Naive thymus-derived CD4-positive, alpha-beta T cell (primary cell): ENCODE measurements at regions of chr2 and their contacts with region 1.

Region 1: DNA sequence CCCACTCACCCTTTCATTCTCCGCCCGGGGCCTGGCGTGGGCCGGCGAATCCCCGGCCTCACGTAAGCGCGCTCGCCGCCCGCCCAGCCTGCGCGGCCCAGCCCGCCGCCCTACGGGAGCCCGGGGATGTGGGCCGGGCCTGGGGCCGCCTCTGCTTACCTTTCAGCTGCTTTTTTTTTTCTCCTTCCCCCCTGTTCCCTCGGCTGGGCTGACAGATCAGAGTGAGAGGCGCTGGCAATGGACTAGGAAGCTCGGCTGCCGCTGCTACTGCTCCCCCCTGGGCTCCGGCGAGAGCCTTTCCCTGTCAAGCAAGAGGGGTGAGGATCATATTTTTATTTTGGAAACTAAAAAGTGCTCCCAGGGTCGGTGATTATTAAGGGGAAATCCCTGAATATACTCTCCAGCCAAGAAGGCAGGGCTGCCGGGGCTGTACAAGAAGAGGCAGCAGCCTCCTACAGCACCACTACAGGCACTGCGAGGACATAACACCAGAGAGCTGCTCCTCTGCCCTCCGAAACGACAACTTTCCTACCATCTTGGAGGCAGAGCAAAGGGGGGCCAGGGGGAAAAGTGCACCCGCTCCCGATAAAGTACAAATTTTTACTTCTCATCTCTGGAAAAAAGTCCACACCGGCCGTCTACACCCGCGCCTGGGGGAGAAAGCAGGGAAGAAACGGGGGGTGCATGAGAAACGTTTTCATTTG is at the start of gene INO80D:
- DNase-seq: peak; percentile 71 to 92 (median 90)
- ATAC-seq: peak; percentile 95
- H3K4me3 ChIP-seq: peak within 1 kb of the TSS; percentile 97
- H3K4me3 Mint-ChIP-seq: peak within 1 kb of the TSS; percentile 96 to 99 (median 98)
- H3K27ac ChIP-seq: peak within 1 kb of the TSS; percentile 97
- H3K27ac Mint-ChIP-seq: peak within 1 kb of the TSS; percentile 98 to 100 (median 100)
- H3K4me1 ChIP-seq: peaks cover 0 to 9% of the 10 kb centered on the region in 2 donors
- H3K4me1 Mint-ChIP-seq: peaks cover 25 to 61% (median 47%) of the 10 kb centered on the region in 7 donors
- H3K27me3 ChIP-seq: no peaks in the 10 kb centered on the region
- H3K27me3 Mint-ChIP-seq: no peaks in the 10 kb centered on the region
- total RNA-seq, gene INO80D: 30.7 to 50.9 (median 43.4) TPM

Region 2: DNA sequence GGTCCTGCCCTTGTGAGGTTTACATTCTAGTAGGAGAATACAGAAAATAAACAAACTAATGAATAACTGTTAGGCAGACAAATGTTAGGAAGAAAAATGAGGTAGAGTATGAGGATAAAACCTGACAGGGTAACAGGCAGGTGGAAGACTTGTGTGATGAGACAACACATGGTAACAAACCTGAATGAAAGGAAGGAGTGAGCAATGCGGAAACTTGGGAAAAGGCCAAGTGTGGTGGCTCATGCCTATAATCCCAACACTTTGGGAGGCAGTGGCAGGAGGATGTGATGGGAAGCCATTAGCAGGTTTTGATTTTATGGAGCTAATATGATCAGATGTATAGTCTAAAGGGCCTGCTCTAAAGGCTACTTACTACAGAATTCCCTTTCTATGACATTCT is 74.1 kb before region 1 on chr2:
- CTCF ChIA-PET with region 1: no interaction called
- POLR2A ChIA-PET with region 1: no interaction called
- intact Hi-C with region 1: loop called in 1 of 2 experiments (anchors 5 kb)
- DNase-seq: no peak
- ATAC-seq: no peak
- H3K4me3 ChIP-seq: no peak overlapping the region
- H3K4me3 Mint-ChIP-seq: no peak overlapping the region
- H3K27ac ChIP-seq: no peak overlapping the region
- H3K27ac Mint-ChIP-seq: peak overlapping the region in 4 of 9 donors; percentile 16 to 66 (median 40)
- H3K4me1 ChIP-seq: no peaks in the 10 kb centered on the region
- H3K4me1 Mint-ChIP-seq: peaks cover 0 to 5% (median 0%) of the 10 kb centered on the region in 7 donors
- H3K27me3 ChIP-seq: no peaks in the 10 kb centered on the region
- H3K27me3 Mint-ChIP-seq: no peaks in the 10 kb centered on the region

Region 3: GRCh38 chr2:206054952-206055351 is 30.9 kb before region 1 on chr2:
- CTCF ChIA-PET with region 1: interaction called, 3 read pairs
- POLR2A ChIA-PET with region 1: interaction called, 5 read pairs
- intact Hi-C with region 1: loop called in 1 of 2 experiments (anchors 2 kb)
- DNase-seq: no peak
- ATAC-seq: no peak
- H3K4me3 ChIP-seq: no peak overlapping the region
- H3K4me3 Mint-ChIP-seq: no peak overlapping the region
- H3K27ac ChIP-seq: no peak overlapping the region
- H3K27ac Mint-ChIP-seq: peak overlapping the region in 3 of 9 donors; percentile 10 to 62 (median 46)
- H3K4me1 ChIP-seq: peaks cover 0 to 4% of the 10 kb centered on the region in 2 donors
- H3K4me1 Mint-ChIP-seq: peaks cover 3 to 34% (median 22%) of the 10 kb centered on the region in 7 donors
- H3K27me3 ChIP-seq: no peaks in the 10 kb centered on the region
- H3K27me3 Mint-ChIP-seq: no peaks in the 10 kb centered on the region

Region 4: GRCh38 chr2:206127656-206128055 is 41.8 kb after region 1 on chr2:
- CTCF ChIA-PET with region 1: no interaction called
- POLR2A ChIA-PET with region 1: no interaction called
- intact Hi-C with region 1: loop called in 1 of 2 experiments (anchors 5 kb)
- DNase-seq: no peak
- ATAC-seq: no peak
- H3K4me3 ChIP-seq: no peak overlapping the region
- H3K4me3 Mint-ChIP-seq: no peak overlapping the region
- H3K27ac ChIP-seq: no peak overlapping the region
- H3K27ac Mint-ChIP-seq: no peak overlapping the region
- H3K4me1 ChIP-seq: no peaks in the 10 kb centered on the region
- H3K4me1 Mint-ChIP-seq: no peaks in the 10 kb centered on the region
- H3K27me3 ChIP-seq: no peaks in the 10 kb centered on the region
- H3K27me3 Mint-ChIP-seq: no peaks in the 10 kb centered on the region

Region 5: GRCh38 chr2:206814498-206814897 is 728.6 kb after region 1 on chr2:
- CTCF ChIA-PET with region 1: no interaction called
- POLR2A ChIA-PET with region 1: no interaction called
- intact Hi-C with region 1: no loop called
- DNase-seq: no peak
- ATAC-seq: no peak
- H3K4me3 ChIP-seq: no peak overlapping the region
- H3K4me3 Mint-ChIP-seq: no peak overlapping the region
- H3K27ac ChIP-seq: no peak overlapping the region
- H3K27ac Mint-ChIP-seq: no peak overlapping the region
- H3K4me1 ChIP-seq: no peaks in the 10 kb centered on the region
- H3K4me1 Mint-ChIP-seq: no peaks in the 10 kb centered on the region
- H3K27me3 ChIP-seq: no peaks in the 10 kb centered on the region
- H3K27me3 Mint-ChIP-seq: peaks cover 0 to 5% (median 0%) of the 10 kb centered on the region in 5 donors